Thyroid gland (tissue), 4 donors: ENCODE measurements at regions of chr2 and their contacts with region 1.

Region 1: DNA sequence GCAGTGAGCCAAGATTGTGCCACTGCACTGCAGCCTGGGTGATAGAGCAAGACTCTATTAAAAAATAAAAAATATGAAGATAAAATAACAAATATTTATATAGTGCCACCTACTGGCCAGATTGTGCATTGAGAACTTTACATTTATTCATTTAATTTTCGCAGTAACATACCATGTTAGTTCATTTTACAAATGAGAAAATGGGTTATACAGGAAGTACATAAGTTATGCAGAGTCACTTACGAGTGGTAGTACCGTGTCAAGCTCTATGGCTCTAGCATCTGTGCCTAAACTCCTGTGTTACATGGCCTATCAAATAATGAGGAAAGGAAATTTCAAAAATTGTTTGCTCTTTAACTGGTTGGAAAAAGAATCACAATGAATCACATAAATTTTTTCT is 27.9 kb downstream of the RIF1 start:
- DNase-seq: no peak
- H3K4me3 ChIP-seq: no peak overlapping the region
- H3K27ac ChIP-seq: no peak overlapping the region
- H3K4me1 ChIP-seq: no peaks in the 10 kb centered on the region
- H3K27me3 ChIP-seq: no peaks in the 10 kb centered on the region
- CTCF ChIP-seq: peak in 5 of 6 experiments; percentile 22 to 74 (median 50)
- POLR2A ChIP-seq: no peak

Region 2: GRCh38 chr2:151269798-151270568 is 167.6 kb before region 1 on chr2:
- intact Hi-C with region 1: loop called (anchors 10 kb)
- DNase-seq: no peak
- H3K4me3 ChIP-seq: no peak overlapping the region
- H3K27ac ChIP-seq: no peak overlapping the region
- H3K4me1 ChIP-seq: no peaks in the 10 kb centered on the region
- H3K27me3 ChIP-seq: no peaks in the 10 kb centered on the region
- CTCF ChIP-seq: no peak
- POLR2A ChIP-seq: no peak